Heart left ventricle (tissue), 16 donors: ENCODE measurements at regions of chr3 and their contacts with region 1.

Region 1: DNA sequence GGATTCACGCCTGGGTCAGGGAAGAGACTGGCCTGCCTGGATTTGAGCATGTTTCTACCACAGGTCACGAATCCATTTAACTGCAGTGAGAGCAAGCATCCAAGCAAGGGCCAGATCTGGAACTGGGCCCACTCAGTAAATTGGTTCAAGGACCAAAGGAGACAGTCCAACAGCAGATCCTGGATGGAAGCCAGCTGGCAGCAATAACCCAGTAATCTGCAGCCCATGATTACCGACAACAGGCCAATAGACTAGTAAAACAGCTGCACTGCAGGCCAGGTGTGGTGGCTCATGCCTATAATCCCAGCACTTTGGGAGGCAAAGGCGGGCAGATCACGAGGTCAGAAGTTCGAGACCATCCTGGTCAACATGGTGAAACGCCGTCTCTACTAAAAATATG is 11.8 kb downstream of the SAMD7 start:
- DNase-seq: peak; percentile 74 to 92 (median 86)
- ATAC-seq: peak; percentile 94 to 98 (median 96)
- H3K4me3 ChIP-seq: no peak overlapping the region
- H3K27ac ChIP-seq: no peak overlapping the region
- H3K4me1 ChIP-seq: peaks cover 0 to 3% (median 0%) of the 10 kb centered on the region in 12 donors
- H3K27me3 ChIP-seq: peaks cover 0 to 4% (median 0%) of the 10 kb centered on the region in 9 donors
- CTCF ChIP-seq: no peak
- POLR2A ChIP-seq: no peak

Region 2: GRCh38 chr3:169886671-169887070 is 36.5 kb before region 1 on chr3:
- intact Hi-C with region 1: loop called in 1 of 10 experiments (anchors 2 kb)
- DNase-seq: peak; percentile 77 to 90 (median 83)
- ATAC-seq: peak; percentile 99
- H3K4me3 ChIP-seq: no peak overlapping the region
- H3K27ac ChIP-seq: peak overlapping the region in 1 of 12 donors; percentile 13
- H3K4me1 ChIP-seq: peaks cover 0 to 12% (median 0%) of the 10 kb centered on the region in 12 donors
- H3K27me3 ChIP-seq: no peaks in the 10 kb centered on the region
- CTCF ChIP-seq: no peak
- POLR2A ChIP-seq: no peak

Region 3: GRCh38 chr3:170055209-170055608 is 132.0 kb after region 1 on chr3:
- intact Hi-C with region 1: no loop called
- DNase-seq: no peak
- ATAC-seq: no peak
- H3K4me3 ChIP-seq: no peak overlapping the region
- H3K27ac ChIP-seq: no peak overlapping the region
- H3K4me1 ChIP-seq: peaks cover 0 to 6% (median 0%) of the 10 kb centered on the region in 12 donors
- H3K27me3 ChIP-seq: no peaks in the 10 kb centered on the region
- CTCF ChIP-seq: no peak
- POLR2A ChIP-seq: no peak